Ascending aorta (tissue), 2 donors: ENCODE measurements at regions of chr7 and their contacts with region 1.

Region 1: DNA sequence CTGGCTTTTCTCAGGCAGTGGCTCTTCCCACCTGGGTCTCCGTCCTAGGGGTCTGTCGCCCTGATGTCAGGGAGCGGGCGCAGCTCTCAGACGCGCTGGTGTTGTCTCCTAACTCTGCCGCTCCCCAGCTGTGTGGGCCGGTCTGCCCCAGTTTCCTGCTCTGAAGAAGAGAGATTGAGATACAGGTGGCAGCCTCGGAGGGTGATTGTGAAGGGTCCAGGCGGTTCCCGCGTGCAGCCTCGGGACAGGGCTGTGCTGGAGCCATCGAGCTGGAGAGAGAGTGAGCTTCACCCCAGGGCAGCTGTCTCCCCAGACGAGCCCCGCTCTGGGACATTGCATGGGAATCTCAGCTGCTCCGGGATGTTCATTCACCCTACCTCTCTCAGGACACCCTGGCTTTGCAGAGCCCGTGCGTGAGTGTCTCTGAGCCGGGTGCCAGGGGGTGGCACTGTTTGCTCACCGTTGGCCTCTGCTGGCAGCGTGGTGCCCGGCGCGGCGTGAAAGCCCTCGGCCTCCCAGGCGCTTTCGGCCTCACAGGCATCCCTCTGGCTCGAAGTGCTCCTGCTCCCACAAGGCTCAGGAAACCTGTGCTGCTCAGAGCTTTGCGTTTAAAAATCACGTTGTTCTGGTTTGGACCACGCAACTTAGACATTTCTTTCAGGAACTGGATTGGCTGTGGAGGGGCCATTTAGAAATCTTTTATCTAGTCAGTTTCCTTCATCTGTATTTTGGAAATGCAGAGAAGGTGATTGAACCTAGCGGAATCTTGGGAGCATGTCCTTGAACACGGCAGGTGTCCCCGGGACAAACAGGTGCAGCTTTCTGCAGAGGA is 33.8 kb upstream of the ZFAND2A start:
- DNase-seq: no peak
- H3K4me3 ChIP-seq: no peak overlapping the region
- H3K27ac ChIP-seq: no peak overlapping the region
- H3K4me1 ChIP-seq: no peaks in the 10 kb centered on the region
- H3K27me3 ChIP-seq: peaks cover 13% of the 10 kb centered on the region
- CTCF ChIP-seq: peak; percentile 29 to 60 (median 47)

Region 2: DNA sequence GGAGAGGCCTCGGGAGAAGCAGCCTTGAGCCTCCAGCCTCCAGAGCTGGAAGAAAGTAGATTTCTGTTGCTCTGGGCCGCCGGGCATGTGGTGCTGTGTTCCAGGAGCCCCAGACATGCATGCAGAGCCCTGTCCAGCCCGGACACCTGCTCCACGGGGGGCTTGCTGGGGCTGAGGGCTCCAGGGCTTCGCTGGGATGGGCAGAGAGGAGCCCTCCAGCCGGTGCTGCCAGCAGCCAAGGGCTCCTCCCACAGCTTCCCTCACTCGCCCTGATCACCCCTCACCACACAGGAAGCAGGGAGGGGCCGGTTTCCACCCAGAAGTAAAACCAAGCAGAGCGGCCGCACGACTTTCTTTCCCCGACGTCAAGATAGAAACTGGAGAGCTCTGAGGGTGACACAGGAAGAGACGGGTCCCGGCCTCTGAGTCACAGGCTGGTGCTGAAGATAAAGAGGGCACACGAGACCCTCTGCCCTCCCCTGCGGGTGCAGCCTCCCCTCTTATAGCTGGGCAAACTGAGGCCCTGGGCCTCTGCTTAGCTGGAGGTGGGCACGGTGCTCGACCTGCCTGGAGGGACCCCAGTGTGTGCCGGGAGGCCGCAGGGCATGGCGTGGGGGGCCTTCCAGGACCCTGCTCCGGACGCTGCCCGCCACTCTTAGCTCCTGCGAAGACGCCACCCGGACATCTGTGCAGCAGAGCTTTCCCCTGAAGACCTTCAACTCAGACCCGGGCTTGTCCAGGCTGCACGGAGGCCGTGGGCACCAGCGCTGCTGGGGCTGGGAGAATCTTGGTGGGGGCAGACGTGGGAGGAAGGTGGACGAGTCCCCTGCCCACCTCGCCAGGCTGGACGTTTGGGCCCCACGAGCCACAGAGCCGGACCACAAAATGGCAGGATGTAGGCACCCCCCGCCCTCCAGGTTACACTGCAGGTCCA is 270.4 kb before region 1 on chr7:
- intact Hi-C with region 1: no loop called
- DNase-seq: peak; percentile 79 to 88
- H3K4me3 ChIP-seq: no peak overlapping the region
- H3K27ac ChIP-seq: no peak overlapping the region
- H3K4me1 ChIP-seq: peaks cover 3% of the 10 kb centered on the region in 2 donors
- H3K27me3 ChIP-seq: no peaks in the 10 kb centered on the region
- CTCF ChIP-seq: no peak

Region 3: GRCh38 chr7:1259344-1260243 is 65.8 kb after region 1 on chr7:
- intact Hi-C with region 1: no loop called
- DNase-seq: no peak
- H3K4me3 ChIP-seq: no peak overlapping the region
- H3K27ac ChIP-seq: no peak overlapping the region
- H3K4me1 ChIP-seq: no peaks in the 10 kb centered on the region
- H3K27me3 ChIP-seq: no peaks in the 10 kb centered on the region
- CTCF ChIP-seq: no peak

Region 4: GRCh38 chr7:1432411-1433082 is 238.7 kb after region 1 on chr7:
- intact Hi-C with region 1: loop called (anchors 5 kb)
- DNase-seq: peak in 1 of 2 donors; percentile 73
- H3K4me3 ChIP-seq: no peak overlapping the region
- H3K27ac ChIP-seq: no peak overlapping the region
- H3K4me1 ChIP-seq: no peaks in the 10 kb centered on the region
- H3K27me3 ChIP-seq: no peaks in the 10 kb centered on the region
- CTCF ChIP-seq: peak; percentile 86 to 99 (median 98)